CD4-positive, alpha-beta T cell (primary cell): ENCODE measurements at regions of chr21 and their contacts with region 1.

Region 1: DNA sequence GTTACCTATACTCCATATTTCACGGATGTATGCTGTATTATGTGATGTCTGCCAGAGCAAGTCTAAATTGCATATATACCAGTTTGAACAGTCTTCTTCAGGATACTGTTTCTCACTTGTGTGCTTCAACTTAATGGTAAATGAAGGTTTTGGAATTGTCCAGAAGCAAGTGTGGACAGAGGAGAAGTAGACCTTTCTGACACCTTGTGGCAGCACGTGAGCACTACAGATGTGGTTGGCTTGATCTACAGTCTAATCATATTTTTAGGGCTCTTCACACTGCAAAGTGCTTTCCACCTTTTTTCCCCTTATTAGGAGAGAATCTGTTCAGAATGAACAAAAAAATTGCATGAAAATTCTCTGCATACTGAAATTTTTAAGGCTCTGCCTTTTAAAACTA is 10.9 kb downstream of the MORC3 start:
- DNase-seq: peak in 13 of 14 experiments; percentile 16 to 77 (median 41)
- ATAC-seq: peak; percentile 91
- H3K4me3 ChIP-seq: no peak overlapping the region
- H3K4me3 Mint-ChIP-seq: peak overlapping the region; percentile 8
- H3K27ac ChIP-seq: no peak overlapping the region
- H3K27ac Mint-ChIP-seq: peak overlapping the region; percentile 87
- H3K4me1 ChIP-seq: peaks cover 32% of the 10 kb centered on the region
- H3K4me1 Mint-ChIP-seq: peaks cover 44% of the 10 kb centered on the region
- H3K27me3 ChIP-seq: no peaks in the 10 kb centered on the region
- H3K27me3 Mint-ChIP-seq: no peaks in the 10 kb centered on the region
- CTCF ChIP-seq: peak; percentile 80

Region 2: DNA sequence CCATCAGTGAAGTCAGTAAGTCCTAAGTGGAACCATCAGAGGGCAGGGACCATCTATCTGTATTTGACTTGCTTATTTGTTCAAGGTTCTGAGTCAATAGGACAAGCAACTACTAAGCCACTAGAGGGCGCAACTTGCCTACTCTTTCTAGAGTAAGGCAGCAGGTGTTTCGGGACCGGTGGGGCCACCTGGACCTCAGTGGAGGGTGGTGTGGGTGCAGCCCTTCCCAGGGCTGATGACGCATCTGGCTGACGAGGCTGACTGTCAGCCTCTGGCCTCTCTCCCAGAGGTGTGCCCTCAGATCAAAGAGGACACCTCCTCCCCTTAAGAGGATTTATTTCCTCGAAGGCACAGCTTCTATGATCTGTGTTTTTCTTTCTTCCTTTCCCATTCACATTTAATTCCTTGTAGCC is 189.4 kb before region 1 on chr21:
- CTCF ChIA-PET with region 1: no interaction called
- POLR2A ChIA-PET with region 1: interaction called, 3 read pairs
- intact Hi-C with region 1: loop called (anchors 1 to 2 kb)
- DNase-seq: peak; percentile 68 to 96 (median 82)
- ATAC-seq: peak; percentile 89
- H3K4me3 ChIP-seq: no peak overlapping the region
- H3K4me3 Mint-ChIP-seq: peak overlapping the region; percentile 0
- H3K27ac ChIP-seq: peak overlapping the region; percentile 19 to 38
- H3K27ac Mint-ChIP-seq: peak overlapping the region; percentile 66
- H3K4me1 ChIP-seq: peaks cover 33% of the 10 kb centered on the region
- H3K4me1 Mint-ChIP-seq: peaks cover 24% of the 10 kb centered on the region
- H3K27me3 ChIP-seq: no peaks in the 10 kb centered on the region
- H3K27me3 Mint-ChIP-seq: no peaks in the 10 kb centered on the region
- CTCF ChIP-seq: peak; percentile 84

Region 3: GRCh38 chr21:36260030-36260787 is 70.7 kb before region 1 on chr21:
- CTCF ChIA-PET with region 1: interaction called, 5 read pairs
- POLR2A ChIA-PET with region 1: no interaction called
- intact Hi-C with region 1: loop called (anchors 1 to 2 kb)
- DNase-seq: peak in 12 of 14 experiments; percentile 13 to 81 (median 40)
- ATAC-seq: peak; percentile 93
- H3K4me3 ChIP-seq: peak overlapping the region; percentile 50
- H3K4me3 Mint-ChIP-seq: peak overlapping the region; percentile 89
- H3K27ac ChIP-seq: peak overlapping the region in 1 of 2 donors; percentile 27
- H3K27ac Mint-ChIP-seq: peak overlapping the region; percentile 93
- H3K4me1 ChIP-seq: peaks cover 9% of the 10 kb centered on the region
- H3K4me1 Mint-ChIP-seq: peaks cover 9% of the 10 kb centered on the region
- H3K27me3 ChIP-seq: no peaks in the 10 kb centered on the region
- H3K27me3 Mint-ChIP-seq: no peaks in the 10 kb centered on the region
- CTCF ChIP-seq: peak; percentile 75

Region 4: DNA sequence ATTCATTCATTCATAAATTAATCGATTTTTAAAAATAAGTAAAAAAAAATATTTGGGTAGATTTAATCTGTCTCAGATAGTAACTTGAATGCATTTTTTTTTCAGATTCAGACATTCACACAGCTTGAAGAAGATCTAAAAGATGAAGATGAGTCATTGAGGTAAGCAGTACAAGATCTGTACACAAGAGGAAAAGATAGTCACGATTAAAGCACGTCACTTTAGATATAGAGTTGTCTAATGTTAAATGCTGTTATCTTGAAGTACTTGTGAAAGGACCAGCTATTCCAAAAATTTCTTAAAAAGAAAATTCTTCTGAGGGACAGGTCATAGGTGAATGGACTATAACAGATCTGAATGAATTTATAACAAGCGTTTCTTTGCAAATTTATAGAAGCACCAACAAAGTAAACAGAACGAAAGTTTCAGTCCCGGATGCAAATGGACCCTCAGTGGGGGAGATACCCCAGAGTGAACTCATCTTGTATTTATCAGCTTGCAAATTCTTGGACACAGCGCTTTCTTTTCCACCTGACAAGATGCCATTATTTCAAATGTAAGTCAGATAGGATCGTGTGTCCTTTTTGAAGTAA is 42.2 kb before region 1 on chr21:
- CTCF ChIA-PET with region 1: interaction called, 6 read pairs
- POLR2A ChIA-PET with region 1: interaction called, 291 read pairs
- intact Hi-C with region 1: loop called in 1 of 2 experiments (anchors 2 kb)
- DNase-seq: peak in 3 of 14 experiments; percentile 66 to 77 (median 73)
- ATAC-seq: peak; percentile 79
- H3K4me3 ChIP-seq: peak overlapping the region; percentile 27
- H3K4me3 Mint-ChIP-seq: peak overlapping the region; percentile 78
- H3K27ac ChIP-seq: peak overlapping the region; percentile 76 to 86
- H3K27ac Mint-ChIP-seq: peak overlapping the region; percentile 96
- H3K4me1 ChIP-seq: peaks cover 20% of the 10 kb centered on the region
- H3K4me1 Mint-ChIP-seq: peaks cover 35% of the 10 kb centered on the region
- H3K27me3 ChIP-seq: no peaks in the 10 kb centered on the region
- H3K27me3 Mint-ChIP-seq: no peaks in the 10 kb centered on the region
- CTCF ChIP-seq: no peak

Region 5: DNA sequence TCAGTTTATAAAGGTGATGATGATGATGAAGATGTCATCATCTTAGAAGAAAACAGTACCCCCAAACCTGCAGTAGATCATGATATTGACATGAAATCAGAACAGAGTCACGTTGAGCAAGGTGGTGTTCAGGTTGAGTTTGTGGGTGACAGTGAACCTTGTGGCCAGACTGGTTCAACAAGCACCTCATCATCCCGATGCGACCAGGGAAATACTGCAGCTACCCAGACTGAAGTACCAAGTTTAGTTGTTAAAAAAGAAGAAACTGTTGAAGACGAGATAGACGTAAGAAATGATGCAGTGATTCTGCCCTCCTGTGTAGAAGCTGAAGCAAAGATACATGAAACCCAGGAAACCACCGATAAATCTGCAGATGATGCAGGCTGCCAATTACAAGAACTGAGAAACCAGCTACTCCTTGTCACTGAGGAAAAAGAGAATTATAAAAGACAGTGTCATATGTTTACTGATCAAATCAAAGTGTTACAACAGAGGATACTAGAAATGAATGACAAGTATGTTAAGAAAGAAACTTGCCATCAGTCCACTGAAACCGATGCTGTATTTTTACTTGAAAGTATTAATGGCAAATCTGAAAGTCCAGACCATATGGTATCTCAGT is 38.3 kb after region 1 on chr21:
- CTCF ChIA-PET with region 1: no interaction called
- POLR2A ChIA-PET with region 1: no interaction called
- intact Hi-C with region 1: loop called in 1 of 2 experiments (anchors 5 kb)
- DNase-seq: no peak
- ATAC-seq: no peak
- H3K4me3 ChIP-seq: no peak overlapping the region
- H3K4me3 Mint-ChIP-seq: no peak overlapping the region
- H3K27ac ChIP-seq: no peak overlapping the region
- H3K27ac Mint-ChIP-seq: peak overlapping the region; percentile 3
- H3K4me1 ChIP-seq: no peaks in the 10 kb centered on the region
- H3K4me1 Mint-ChIP-seq: no peaks in the 10 kb centered on the region
- H3K27me3 ChIP-seq: no peaks in the 10 kb centered on the region
- H3K27me3 Mint-ChIP-seq: no peaks in the 10 kb centered on the region
- CTCF ChIP-seq: no peak

Region 6: GRCh38 chr21:36615274-36615964 is 284.5 kb after region 1 on chr21:
- CTCF ChIA-PET with region 1: no interaction called
- POLR2A ChIA-PET with region 1: no interaction called
- intact Hi-C with region 1: no loop called
- DNase-seq: no peak
- ATAC-seq: no peak
- H3K4me3 ChIP-seq: no peak overlapping the region
- H3K4me3 Mint-ChIP-seq: no peak overlapping the region
- H3K27ac ChIP-seq: no peak overlapping the region
- H3K27ac Mint-ChIP-seq: no peak overlapping the region
- H3K4me1 ChIP-seq: no peaks in the 10 kb centered on the region
- H3K4me1 Mint-ChIP-seq: no peaks in the 10 kb centered on the region
- H3K27me3 ChIP-seq: peaks cover 3 to 13% of the 10 kb centered on the region in 2 experiments
- H3K27me3 Mint-ChIP-seq: peaks cover 4% of the 10 kb centered on the region
- CTCF ChIP-seq: no peak